ENCODE measurements at regions of chr18 and their contacts with region 1.

Region 1: DNA sequence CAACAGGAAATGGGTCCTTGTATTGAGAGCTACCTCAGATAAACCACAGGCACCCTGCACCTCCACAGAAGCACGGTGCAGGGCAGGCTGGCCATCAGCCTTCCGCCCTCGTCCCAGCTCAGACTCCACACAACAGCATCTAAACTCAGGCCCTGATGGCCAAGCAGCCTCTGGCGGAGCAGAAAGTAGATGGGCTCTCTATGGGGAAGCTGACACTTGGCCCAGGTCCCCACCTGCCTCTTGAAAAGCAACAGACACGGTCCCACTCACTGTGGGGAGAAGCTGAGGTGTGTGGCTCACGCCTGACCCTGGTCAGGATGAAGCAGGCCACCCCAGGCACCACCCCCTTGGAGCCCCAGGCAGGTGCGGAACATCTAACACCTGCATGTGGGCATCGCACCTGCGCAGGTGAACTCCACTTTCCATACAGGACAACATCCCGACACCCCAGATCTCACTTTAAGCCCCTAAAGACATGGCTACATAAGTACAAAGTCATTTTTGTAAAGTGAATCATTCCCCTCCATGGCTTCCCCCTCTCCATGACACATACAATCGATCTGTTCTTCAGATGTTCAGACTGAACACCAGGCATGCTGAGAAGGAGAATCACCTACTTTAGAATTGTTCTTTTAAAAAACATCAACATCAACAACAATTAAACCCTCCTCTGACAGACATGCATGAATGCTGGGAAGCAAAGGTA is 208.4 kb downstream of the ZBTB7C start:
- DNase-seq: no peak

Region 2: DNA sequence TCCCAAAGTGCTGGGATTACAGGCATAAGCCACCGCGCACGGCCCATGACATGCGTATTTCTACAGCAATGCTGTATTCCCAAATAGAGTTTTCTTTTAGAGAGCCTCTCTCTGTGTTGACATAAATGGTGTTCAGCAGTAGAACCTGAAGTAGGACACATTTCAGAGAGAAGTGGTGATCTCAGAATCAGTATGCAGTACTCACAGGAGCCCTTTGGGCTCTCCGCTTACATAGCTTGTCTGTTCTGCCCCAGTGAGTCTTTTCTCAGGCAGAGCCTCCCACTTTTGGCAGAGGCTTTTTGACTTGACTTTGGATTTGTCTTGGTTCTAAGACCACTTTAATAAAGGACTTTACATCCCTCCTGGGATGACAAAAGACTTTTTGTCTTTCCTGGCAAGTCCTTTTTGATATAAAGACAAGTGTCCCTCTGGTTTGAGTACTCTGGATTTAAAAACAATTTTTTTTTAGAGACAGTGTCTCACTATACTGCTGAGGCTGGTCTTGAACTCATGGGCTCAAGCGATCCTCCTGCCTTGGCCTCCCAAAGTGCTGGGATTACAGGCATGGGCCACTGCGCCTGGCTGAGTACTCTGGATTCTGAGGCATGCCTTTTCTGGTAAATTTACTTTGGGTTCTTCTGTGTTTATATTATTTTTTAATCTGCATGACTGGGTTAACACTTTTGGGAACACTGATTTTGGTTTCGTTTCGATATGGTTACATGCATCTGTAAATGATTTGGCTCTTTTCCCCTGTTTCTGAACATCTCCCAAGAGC is 383.6 kb before region 1 on chr18:
- intact Hi-C with region 1: no loop called
- DNase-seq: no peak

Region 3: GRCh38 chr18:48230467-48231113 is 29.8 kb after region 1 on chr18:
- intact Hi-C with region 1: loop called in 1 of 2 experiments (anchors 1 kb)
- DNase-seq: peak; percentile 90